Caco-2 (cell line): ENCODE measurements at regions of chr3 and their contacts with region 1.

Region 1: DNA sequence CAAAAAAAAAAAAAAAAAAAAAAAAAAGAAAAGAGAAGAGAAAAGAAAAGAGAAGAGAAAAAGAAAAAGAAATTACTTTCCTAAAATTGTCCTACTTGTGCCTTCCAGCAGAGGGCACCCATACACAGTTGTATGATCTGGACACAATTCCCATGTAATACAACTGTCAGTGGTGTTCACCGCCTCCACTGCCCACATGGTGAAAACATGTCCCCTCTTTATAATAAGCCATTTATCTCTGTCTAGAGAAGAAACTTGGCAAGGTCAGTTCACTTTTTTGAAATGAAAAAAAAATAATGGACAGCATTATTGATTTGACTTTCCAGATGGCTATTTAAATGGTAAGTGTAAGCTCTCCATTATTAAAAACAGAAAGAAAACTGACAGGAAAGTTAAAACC is 459.4 kb downstream of the GBE1 start:
- DNase-seq: peak; percentile 50 to 59
- H3K4me3 ChIP-seq: no peak overlapping the region
- H3K4me3 Mint-ChIP-seq: no peak overlapping the region
- H3K27ac Mint-ChIP-seq: no peak overlapping the region
- H3K4me1 ChIP-seq: peaks cover 30% of the 10 kb centered on the region
- H3K4me1 Mint-ChIP-seq: peaks cover 29% of the 10 kb centered on the region
- H3K27me3 ChIP-seq: no peaks in the 10 kb centered on the region
- H3K27me3 Mint-ChIP-seq: no peaks in the 10 kb centered on the region
- CTCF ChIP-seq: peak; percentile 68 to 79

Region 2: GRCh38 chr3:81218023-81218422 is 84.0 kb before region 1 on chr3:
- CTCF ChIA-PET with region 1: interaction called, 4 read pairs
- POLR2A ChIA-PET with region 1: no interaction called
- intact Hi-C with region 1: loop called (anchors 1 kb)
- DNase-seq: peak; percentile 46 to 60
- H3K4me3 ChIP-seq: no peak overlapping the region
- H3K4me3 Mint-ChIP-seq: no peak overlapping the region
- H3K27ac Mint-ChIP-seq: no peak overlapping the region
- H3K4me1 ChIP-seq: peaks cover 12% of the 10 kb centered on the region
- H3K4me1 Mint-ChIP-seq: peaks cover 14% of the 10 kb centered on the region
- H3K27me3 ChIP-seq: no peaks in the 10 kb centered on the region
- H3K27me3 Mint-ChIP-seq: no peaks in the 10 kb centered on the region
- CTCF ChIP-seq: peak; percentile 48 to 87

Region 3: GRCh38 chr3:81277853-81278252 is 24.2 kb before region 1 on chr3:
- CTCF ChIA-PET with region 1: no interaction called
- POLR2A ChIA-PET with region 1: no interaction called
- intact Hi-C with region 1: loop called (anchors 1 kb)
- DNase-seq: no peak
- H3K4me3 ChIP-seq: no peak overlapping the region
- H3K4me3 Mint-ChIP-seq: no peak overlapping the region
- H3K27ac Mint-ChIP-seq: peak overlapping the region; percentile 65
- H3K4me1 ChIP-seq: peaks cover 34% of the 10 kb centered on the region
- H3K4me1 Mint-ChIP-seq: peaks cover 28% of the 10 kb centered on the region
- H3K27me3 ChIP-seq: no peaks in the 10 kb centered on the region
- H3K27me3 Mint-ChIP-seq: no peaks in the 10 kb centered on the region
- CTCF ChIP-seq: no peak

Region 4: DNA sequence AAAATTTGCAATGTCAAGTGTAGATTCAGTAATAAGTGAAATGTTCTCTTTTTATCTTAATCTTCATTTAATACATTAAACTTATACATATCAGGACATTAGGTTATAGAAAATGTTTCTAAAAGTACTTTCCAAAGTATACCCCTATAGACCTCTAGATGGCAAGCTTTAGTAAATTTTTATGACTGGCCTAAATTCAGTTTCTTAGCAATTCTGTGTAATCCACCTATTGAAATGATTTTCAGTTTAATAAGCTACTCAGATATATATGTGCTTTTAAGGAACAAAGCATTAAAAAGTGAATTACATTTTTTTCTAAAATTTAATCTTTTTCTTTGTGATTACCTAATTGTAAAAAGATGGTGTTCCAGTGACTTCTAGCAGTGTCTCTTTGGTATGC is 117.2 kb after region 1 on chr3:
- CTCF ChIA-PET with region 1: no interaction called
- POLR2A ChIA-PET with region 1: no interaction called
- intact Hi-C with region 1: loop called (anchors 10 kb)
- DNase-seq: no peak
- H3K4me3 ChIP-seq: no peak overlapping the region
- H3K4me3 Mint-ChIP-seq: no peak overlapping the region
- H3K27ac Mint-ChIP-seq: no peak overlapping the region
- H3K4me1 ChIP-seq: no peaks in the 10 kb centered on the region
- H3K4me1 Mint-ChIP-seq: no peaks in the 10 kb centered on the region
- H3K27me3 ChIP-seq: no peaks in the 10 kb centered on the region
- H3K27me3 Mint-ChIP-seq: no peaks in the 10 kb centered on the region
- CTCF ChIP-seq: peak in 1 of 2 experiments; percentile 41

Region 5: DNA sequence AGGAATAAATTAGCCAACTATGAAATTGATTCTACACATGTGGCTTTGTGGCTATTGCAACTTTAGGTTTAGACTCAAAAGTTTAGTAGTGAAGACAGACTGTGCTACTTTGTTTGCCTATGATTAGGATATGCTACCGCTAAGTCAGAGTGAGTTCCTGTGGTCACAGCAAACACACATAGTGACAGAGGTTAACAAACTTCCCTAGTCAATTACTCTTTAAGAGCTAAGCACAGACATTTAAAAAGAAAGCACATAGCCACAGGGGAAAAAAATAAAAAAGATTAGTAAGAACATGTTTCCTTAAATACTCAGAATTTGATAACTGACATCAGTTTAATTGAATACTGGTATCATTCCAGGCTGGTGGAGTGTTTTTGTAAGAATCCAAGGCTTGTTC is 252.3 kb after region 1 on chr3:
- CTCF ChIA-PET with region 1: no interaction called
- POLR2A ChIA-PET with region 1: no interaction called
- intact Hi-C with region 1: loop called (anchors 10 kb)
- DNase-seq: no peak
- H3K4me3 ChIP-seq: no peak overlapping the region
- H3K4me3 Mint-ChIP-seq: no peak overlapping the region
- H3K27ac Mint-ChIP-seq: no peak overlapping the region
- H3K4me1 ChIP-seq: peaks cover 4% of the 10 kb centered on the region; the same call in 1 of the 2 replicates
- H3K4me1 Mint-ChIP-seq: peaks cover 6% of the 10 kb centered on the region
- H3K27me3 ChIP-seq: no peaks in the 10 kb centered on the region
- H3K27me3 Mint-ChIP-seq: no peaks in the 10 kb centered on the region
- CTCF ChIP-seq: no peak

Region 6: DNA sequence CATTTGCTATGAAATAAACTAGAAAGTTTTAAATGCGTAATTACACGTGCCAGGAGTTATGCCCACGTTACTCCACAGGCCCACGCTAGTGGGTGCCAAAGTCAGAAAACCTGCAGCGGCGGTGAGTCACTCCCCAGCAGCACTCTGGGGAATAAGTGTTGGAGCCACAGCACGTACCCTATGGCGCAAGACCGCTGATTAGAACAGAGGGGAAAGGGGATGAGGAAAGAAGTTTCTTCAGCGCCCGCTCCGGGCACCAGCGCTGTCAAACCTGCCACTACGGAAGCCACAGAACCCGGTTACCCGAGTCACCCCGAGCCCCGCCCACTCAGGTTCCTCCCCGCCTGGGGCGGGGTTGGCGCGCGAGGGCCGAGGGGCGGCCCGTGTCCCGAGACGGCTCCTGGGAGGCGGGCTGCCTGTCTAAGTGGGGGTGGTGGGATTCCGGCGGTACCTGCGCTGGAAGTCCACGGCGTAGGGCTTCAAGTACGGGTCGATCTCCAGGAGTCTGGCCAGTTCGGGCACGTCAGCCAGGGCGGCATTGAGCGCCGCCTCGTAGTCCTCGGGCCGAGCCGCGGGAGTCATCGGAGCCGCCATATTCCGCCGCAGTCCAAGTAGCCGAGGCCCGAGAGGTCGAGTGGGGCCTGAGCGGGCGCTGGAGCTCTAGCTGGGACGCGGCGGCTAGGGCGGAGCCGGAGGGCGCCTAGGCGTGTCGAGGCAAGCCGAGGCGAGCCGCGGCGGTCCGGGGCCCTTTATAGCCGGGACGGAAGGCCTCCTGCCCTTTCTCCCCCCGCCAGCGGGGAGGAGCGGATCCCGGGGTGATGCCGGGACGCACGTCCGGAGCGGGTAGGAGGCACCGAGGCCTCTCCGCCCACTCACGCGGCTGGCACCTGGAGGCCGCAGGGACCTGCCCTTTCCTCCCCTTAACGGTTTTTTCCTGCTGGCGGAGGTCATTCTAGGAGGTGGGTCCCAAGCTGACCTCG is 459.2 kb after region 1 on chr3 and contains the start of gene GBE1:
- CTCF ChIA-PET with region 1: no interaction called
- POLR2A ChIA-PET with region 1: no interaction called
- intact Hi-C with region 1: loop called (anchors 10 kb)
- DNase-seq: peak; percentile 90 to 94
- H3K4me3 ChIP-seq: peak within 1 kb of the TSS; percentile 86
- H3K4me3 Mint-ChIP-seq: peak within 1 kb of the TSS; percentile 82
- H3K27ac Mint-ChIP-seq: peak within 1 kb of the TSS; percentile 91
- H3K4me1 ChIP-seq: no peaks in the 10 kb centered on the region; the same call in 1 of the 2 replicates
- H3K4me1 Mint-ChIP-seq: peaks cover 5% of the 10 kb centered on the region
- H3K27me3 ChIP-seq: no peaks in the 10 kb centered on the region
- H3K27me3 Mint-ChIP-seq: no peaks in the 10 kb centered on the region
- CTCF ChIP-seq: peak in 1 of 2 experiments; percentile 20
- total RNA-seq, gene GBE1: 8.1 and 8.2 TPM in 2 replicates